GM12878 (cell line): ENCODE measurements at regions of chr2 and their contacts with region 1.

Region 1: GRCh38 chr2:88590998-88591613 is 36.2 kb downstream of the EIF2AK3 start:
- DNase-seq: peak; percentile 45
- ATAC-seq: peak; percentile 94
- H3K4me3 ChIP-seq: no peak overlapping the region
- H3K27ac ChIP-seq: no peak overlapping the region
- H3K4me1 ChIP-seq: no peaks in the 10 kb centered on the region
- H3K27me3 ChIP-seq: no peaks in the 10 kb centered on the region
- CTCF ChIP-seq: peak; percentile 73 to 90 (median 74)
- EP300 ChIP-seq: no peak
- POLR2A ChIP-seq: no peak
- RAD21 ChIP-seq: peak; percentile 98

Region 2: DNA sequence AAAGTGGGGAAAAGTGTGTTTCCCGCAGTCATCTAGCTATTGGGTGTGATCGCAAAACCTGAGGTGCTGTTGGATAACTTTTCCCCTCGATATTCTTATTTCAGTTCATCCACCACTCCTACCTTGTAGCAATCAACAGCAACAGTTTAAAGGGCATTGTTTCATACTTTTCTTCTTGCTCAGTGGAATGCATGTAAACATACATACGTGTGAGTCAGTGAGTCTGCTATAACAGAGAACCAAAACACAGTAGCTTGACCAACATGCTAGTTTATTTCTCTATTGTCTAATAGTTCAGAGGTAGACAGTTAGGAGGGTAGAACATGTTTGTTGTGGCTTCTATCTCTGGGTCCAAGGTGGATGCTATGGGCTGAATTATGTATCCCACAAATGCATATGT is 61.0 kb before region 1 on chr2:
- CTCF ChIA-PET with region 1: no interaction called
- POLR2A ChIA-PET with region 1: no interaction called
- RAD21 ChIA-PET with region 1: no interaction called
- SMC1A ChIA-PET with region 1: no interaction called
- in situ Hi-C with region 1: no loop called
- intact Hi-C with region 1: no loop called
- DNase-seq: no peak
- ATAC-seq: no peak
- H3K4me3 ChIP-seq: no peak overlapping the region
- H3K27ac ChIP-seq: no peak overlapping the region
- H3K4me1 ChIP-seq: no peaks in the 10 kb centered on the region
- H3K27me3 ChIP-seq: no peaks in the 10 kb centered on the region
- CTCF ChIP-seq: no peak
- EP300 ChIP-seq: no peak
- POLR2A ChIP-seq: no peak
- RAD21 ChIP-seq: no peak

Region 3: GRCh38 chr2:88606371-88607030 is 15.4 kb after region 1 on chr2:
- CTCF ChIA-PET with region 1: interaction called, 9 read pairs
- POLR2A ChIA-PET with region 1: interaction called, 3 read pairs
- RAD21 ChIA-PET with region 1: interaction called, 14 read pairs
- SMC1A ChIA-PET with region 1: interaction called, 37 read pairs
- in situ Hi-C with region 1: no loop called
- intact Hi-C with region 1: no loop called
- DNase-seq: peak; percentile 68
- ATAC-seq: peak; percentile 87
- H3K4me3 ChIP-seq: no peak overlapping the region
- H3K27ac ChIP-seq: peak overlapping the region; percentile 66
- H3K4me1 ChIP-seq: peaks cover 51% of the 10 kb centered on the region
- H3K27me3 ChIP-seq: no peaks in the 10 kb centered on the region
- CTCF ChIP-seq: no peak
- EP300 ChIP-seq: peak in 1 of 2 experiments; percentile 99; a peak in 3 of 4 replicates
- POLR2A ChIP-seq: no peak
- RAD21 ChIP-seq: no peak

Region 4: GRCh38 chr2:88620015-88620414 is 28.9 kb after region 1 on chr2:
- CTCF ChIA-PET with region 1: interaction called, 12 read pairs
- POLR2A ChIA-PET with region 1: interaction called, 4 read pairs
- RAD21 ChIA-PET with region 1: interaction called, 18 read pairs
- SMC1A ChIA-PET with region 1: interaction called, 14 read pairs
- in situ Hi-C with region 1: no loop called
- intact Hi-C with region 1: no loop called
- DNase-seq: no peak
- ATAC-seq: no peak
- H3K4me3 ChIP-seq: no peak overlapping the region
- H3K27ac ChIP-seq: no peak overlapping the region
- H3K4me1 ChIP-seq: peaks cover 32% of the 10 kb centered on the region
- H3K27me3 ChIP-seq: no peaks in the 10 kb centered on the region
- CTCF ChIP-seq: no peak
- EP300 ChIP-seq: no peak
- POLR2A ChIP-seq: no peak
- RAD21 ChIP-seq: no peak

Region 5: DNA sequence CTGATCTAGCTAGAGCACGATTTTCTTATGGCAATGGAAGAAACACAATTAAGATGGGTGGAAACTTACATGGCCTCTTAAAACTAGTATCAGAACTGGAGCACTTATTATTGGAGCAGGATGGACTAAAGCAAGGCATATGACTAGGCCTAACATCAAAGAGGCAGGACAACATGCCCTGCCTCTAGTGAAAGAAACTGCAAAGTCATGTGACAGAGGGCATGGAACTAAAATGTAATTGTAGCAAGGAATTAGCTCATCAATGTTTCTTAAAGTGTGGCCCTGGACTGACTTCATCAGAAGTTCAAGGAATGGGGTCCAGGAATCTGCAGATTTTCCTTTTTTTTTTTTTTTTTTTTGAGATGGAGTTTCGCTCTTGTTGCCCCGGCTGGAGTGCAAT is 41.5 kb after region 1 on chr2:
- CTCF ChIA-PET with region 1: interaction called, 14 read pairs
- POLR2A ChIA-PET with region 1: interaction called, 5 read pairs
- RAD21 ChIA-PET with region 1: interaction called, 9 read pairs
- SMC1A ChIA-PET with region 1: interaction called, 4 read pairs
- in situ Hi-C with region 1: no loop called
- intact Hi-C with region 1: loop called (anchors 2 kb)
- DNase-seq: no peak
- ATAC-seq: no peak
- H3K4me3 ChIP-seq: no peak overlapping the region
- H3K27ac ChIP-seq: no peak overlapping the region
- H3K4me1 ChIP-seq: peaks cover 4% of the 10 kb centered on the region; the same call in 1 of the 2 replicates
- H3K27me3 ChIP-seq: no peaks in the 10 kb centered on the region
- CTCF ChIP-seq: no peak
- EP300 ChIP-seq: no peak
- POLR2A ChIP-seq: no peak
- RAD21 ChIP-seq: no peak